ENCODE measurements at regions of chr12 and their contacts with region 1.

Region 1: DNA sequence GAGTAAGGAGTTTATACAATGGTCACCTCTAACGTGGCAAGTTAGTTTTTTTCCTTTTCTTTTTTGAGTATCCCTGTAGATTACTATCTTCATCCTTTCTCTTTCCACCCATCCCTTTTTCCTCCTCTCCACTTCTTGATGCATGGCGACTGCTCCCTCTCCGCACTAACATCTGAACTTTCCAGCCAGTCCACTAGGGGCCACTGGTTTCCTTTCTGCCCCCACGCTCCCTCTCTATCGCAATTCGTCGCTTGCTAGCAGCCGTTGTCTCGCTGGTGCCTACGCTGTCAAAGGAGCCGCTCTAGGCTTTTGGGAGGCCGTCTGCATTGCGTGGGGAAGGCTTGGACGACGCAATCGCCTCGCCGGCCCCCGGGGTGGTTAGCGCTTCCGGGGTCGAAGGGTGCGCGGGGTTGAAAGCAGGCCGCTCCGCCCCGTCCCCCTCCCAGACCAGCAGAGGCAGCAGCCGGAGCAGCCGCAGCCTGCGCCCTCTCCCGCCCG is at the start of gene PCBP2:
- DNase-seq: peak; percentile 99
- ATAC-seq: peak; percentile 97
- H3K4me3 Mint-ChIP-seq: peak within 1 kb of the TSS; percentile 94
- H3K27ac Mint-ChIP-seq: peak within 1 kb of the TSS; percentile 96
- H3K4me1 Mint-ChIP-seq: peaks cover 27% of the 10 kb centered on the region
- H3K27me3 Mint-ChIP-seq: no peaks in the 10 kb centered on the region
- total RNA-seq, gene PCBP2: 881 to 999 TPM

Region 2: GRCh38 chr12:53190108-53190729 is 261.5 kb before region 1 on chr12:
- CTCF ChIA-PET with region 1: no interaction called
- POLR2A ChIA-PET with region 1: no interaction called
- intact Hi-C with region 1: no loop called
- DNase-seq: peak; percentile 74
- ATAC-seq: peak; percentile 94
- H3K4me3 Mint-ChIP-seq: no peak overlapping the region
- H3K27ac Mint-ChIP-seq: peak overlapping the region; percentile 17
- H3K4me1 Mint-ChIP-seq: peaks cover 14% of the 10 kb centered on the region
- H3K27me3 Mint-ChIP-seq: no peaks in the 10 kb centered on the region

Region 3: DNA sequence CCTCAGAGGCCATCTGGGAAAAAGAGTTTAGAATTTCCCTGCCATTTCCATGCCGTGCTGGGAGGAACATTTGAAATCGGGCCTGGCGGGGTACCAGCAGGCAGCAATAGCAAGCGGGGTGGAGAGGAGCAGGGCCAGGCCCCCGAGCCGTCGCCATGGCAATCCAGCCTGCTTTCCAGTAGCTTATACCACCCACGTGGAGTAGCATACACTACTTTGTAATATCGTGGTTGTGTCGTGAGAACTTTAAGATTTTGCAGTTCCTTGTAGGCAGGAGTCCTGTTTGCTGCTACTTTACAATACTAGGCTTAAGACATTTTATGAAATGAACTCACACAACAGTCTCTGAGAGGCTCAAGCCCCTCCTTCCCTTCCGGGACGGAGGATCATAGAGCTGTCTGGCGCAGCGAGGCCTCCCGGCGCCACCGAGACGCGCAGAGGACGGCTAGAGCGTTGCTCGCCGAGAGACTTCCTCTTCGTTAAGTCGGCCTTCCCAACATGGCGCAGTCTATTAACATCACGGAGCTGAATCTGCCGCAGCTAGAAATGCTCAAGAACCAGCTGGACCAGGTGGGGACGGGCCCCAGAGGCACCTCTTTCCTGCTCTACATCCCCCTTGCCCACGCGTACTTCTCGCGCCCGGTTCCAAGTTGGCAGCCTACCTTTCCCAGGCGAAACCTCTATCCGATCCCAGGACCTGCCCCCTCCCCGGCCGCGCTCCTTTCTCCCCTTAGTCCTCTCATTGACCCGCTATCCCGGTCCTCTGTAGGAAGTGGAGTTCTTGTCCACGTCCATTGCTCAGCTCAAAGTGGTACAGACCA is 156.4 kb before region 1 on chr12 and contains the start of gene PFDN5:
- CTCF ChIA-PET with region 1: no interaction called
- POLR2A ChIA-PET with region 1: no interaction called
- intact Hi-C with region 1: loop called in 1 of 2 experiments (anchors 1 kb)
- DNase-seq: peak; percentile 93
- ATAC-seq: peak; percentile 88
- H3K4me3 Mint-ChIP-seq: peak within 1 kb of the TSS; percentile 85
- H3K27ac Mint-ChIP-seq: peak within 1 kb of the TSS; percentile 94
- H3K4me1 Mint-ChIP-seq: peaks cover 52% of the 10 kb centered on the region
- H3K27me3 Mint-ChIP-seq: no peaks in the 10 kb centered on the region
- total RNA-seq, gene PFDN5: 253 to 322 TPM

Region 4: DNA sequence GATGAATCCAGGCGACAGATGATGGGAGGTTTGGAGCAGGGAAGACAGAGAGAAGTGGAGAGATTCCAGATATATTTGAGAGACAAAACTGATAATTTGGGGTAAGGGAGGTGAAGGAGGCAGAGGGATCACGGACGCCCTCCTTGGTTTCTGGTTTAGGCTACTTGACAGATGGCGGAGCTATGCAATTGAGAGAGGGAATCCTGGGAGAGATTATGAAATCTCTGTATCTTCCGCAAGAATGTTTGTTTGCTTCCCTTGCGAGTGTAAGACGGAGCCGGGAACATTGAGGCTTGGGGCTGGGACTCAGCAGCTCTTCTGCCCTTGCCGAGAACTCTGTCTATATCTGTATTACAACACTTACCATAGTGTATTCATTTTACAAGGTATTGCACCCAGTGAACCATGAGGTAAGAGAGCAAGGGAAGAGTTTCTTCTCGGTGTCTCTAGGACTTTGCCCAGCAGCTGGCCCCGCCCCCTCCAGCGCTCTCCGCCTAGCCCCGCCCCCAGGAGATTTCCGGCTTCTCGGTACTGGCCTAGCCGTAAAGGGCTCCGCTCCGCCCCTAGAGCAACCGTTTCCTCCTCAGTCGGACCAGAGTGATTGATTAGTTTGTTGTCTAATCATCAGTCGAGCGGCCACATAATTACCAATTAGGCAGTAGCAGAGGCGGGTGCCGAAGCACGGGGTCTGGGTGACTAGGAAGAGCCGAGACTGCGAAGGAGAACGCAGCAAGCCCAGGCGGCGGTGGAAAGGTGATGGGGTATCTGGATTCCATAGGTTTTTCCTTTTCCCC is 10.5 kb before region 1 on chr12 and contains the start of gene PRR13:
- CTCF ChIA-PET with region 1: interaction called, 4 read pairs
- POLR2A ChIA-PET with region 1: interaction called, 4 read pairs
- intact Hi-C with region 1: loop called (anchors 1 kb)
- DNase-seq: peak; percentile 100
- ATAC-seq: peak; percentile 99
- H3K4me3 Mint-ChIP-seq: peak within 1 kb of the TSS; percentile 92
- H3K27ac Mint-ChIP-seq: peak within 1 kb of the TSS; percentile 95
- H3K4me1 Mint-ChIP-seq: peaks cover 30% of the 10 kb centered on the region
- H3K27me3 Mint-ChIP-seq: no peaks in the 10 kb centered on the region
- total RNA-seq, gene PRR13: 250 to 266 TPM

Region 5: DNA sequence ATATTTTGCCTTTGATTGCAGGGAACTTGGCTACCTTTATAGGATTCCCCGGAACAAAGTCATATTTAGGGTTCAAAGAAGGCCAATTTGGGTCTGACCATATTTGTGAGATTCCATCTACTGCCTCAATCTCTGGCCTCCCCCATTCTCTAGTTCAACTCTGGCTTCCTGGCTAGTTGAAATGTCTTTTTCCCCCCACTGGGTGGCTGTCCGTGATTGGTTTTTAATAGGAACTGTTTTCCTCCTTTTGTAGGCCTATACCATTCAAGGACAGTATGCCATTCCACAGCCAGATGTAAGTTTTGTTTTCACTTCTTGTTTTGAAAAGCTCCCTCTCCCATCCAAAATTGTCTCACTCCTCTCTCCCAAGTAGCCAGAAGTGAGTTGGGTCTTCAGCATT is 14.0 kb after region 1 on chr12:
- CTCF ChIA-PET with region 1: no interaction called
- POLR2A ChIA-PET with region 1: interaction called, 19 read pairs
- intact Hi-C with region 1: loop called in 1 of 2 experiments (anchors 2 kb)
- DNase-seq: no peak
- ATAC-seq: no peak
- H3K4me3 Mint-ChIP-seq: no peak overlapping the region
- H3K27ac Mint-ChIP-seq: peak overlapping the region; percentile 15
- H3K4me1 Mint-ChIP-seq: peaks cover 30% of the 10 kb centered on the region
- H3K27me3 Mint-ChIP-seq: no peaks in the 10 kb centered on the region

Region 6: GRCh38 chr12:53492830-53493611 is 41.3 kb after region 1 on chr12:
- CTCF ChIA-PET with region 1: interaction called, 3 read pairs
- POLR2A ChIA-PET with region 1: interaction called, 4 read pairs
- intact Hi-C with region 1: loop called in 1 of 2 experiments (anchors 2 kb)
- DNase-seq: peak; percentile 93
- ATAC-seq: peak; percentile 94
- H3K4me3 Mint-ChIP-seq: peak overlapping the region; percentile 80
- H3K27ac Mint-ChIP-seq: peak overlapping the region; percentile 88
- H3K4me1 Mint-ChIP-seq: peaks cover 20% of the 10 kb centered on the region
- H3K27me3 Mint-ChIP-seq: no peaks in the 10 kb centered on the region

Region 7: GRCh38 chr12:53500776-53501614 is 49.3 kb after region 1 on chr12 and contains the start of gene TARBP2:
- CTCF ChIA-PET with region 1: interaction called, 3 read pairs
- POLR2A ChIA-PET with region 1: no interaction called
- intact Hi-C with region 1: loop called (anchors 1 to 2 kb)
- DNase-seq: peak; percentile 98
- ATAC-seq: peak; percentile 84
- H3K4me3 Mint-ChIP-seq: peak within 1 kb of the TSS; percentile 81
- H3K27ac Mint-ChIP-seq: peak within 1 kb of the TSS; percentile 98
- H3K4me1 Mint-ChIP-seq: peaks cover 31% of the 10 kb centered on the region
- H3K27me3 Mint-ChIP-seq: no peaks in the 10 kb centered on the region
- total RNA-seq, gene TARBP2: 28.3 to 30.2 TPM

Region 8: DNA sequence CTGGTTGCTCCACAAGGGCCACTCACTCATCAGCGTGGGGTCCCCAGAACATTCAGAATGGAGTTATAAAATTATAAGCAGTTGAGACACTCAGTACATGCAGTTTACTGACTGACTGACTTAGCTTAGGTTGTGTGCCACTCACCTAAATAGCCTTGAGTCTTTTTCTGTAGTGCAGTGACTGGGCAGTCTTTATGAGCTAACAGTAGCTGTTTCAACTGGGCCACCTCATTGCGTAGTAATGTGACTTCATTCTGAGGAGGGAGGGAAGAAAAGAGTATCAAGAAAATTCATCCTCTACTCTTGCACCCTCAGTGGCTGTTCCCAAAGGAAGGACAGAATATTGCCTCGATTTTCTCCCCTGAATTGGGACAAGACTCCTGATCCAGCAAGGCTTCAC is 71.4 kb after region 1 on chr12:
- CTCF ChIA-PET with region 1: no interaction called
- POLR2A ChIA-PET with region 1: no interaction called
- intact Hi-C with region 1: no loop called
- DNase-seq: no peak
- ATAC-seq: no peak
- H3K4me3 Mint-ChIP-seq: no peak overlapping the region
- H3K27ac Mint-ChIP-seq: no peak overlapping the region
- H3K4me1 Mint-ChIP-seq: no peaks in the 10 kb centered on the region
- H3K27me3 Mint-ChIP-seq: no peaks in the 10 kb centered on the region

Region 9: GRCh38 chr12:53596920-53597363 is 145.2 kb after region 1 on chr12:
- CTCF ChIA-PET with region 1: no interaction called
- POLR2A ChIA-PET with region 1: no interaction called
- intact Hi-C with region 1: no loop called
- DNase-seq: no peak
- ATAC-seq: no peak
- H3K4me3 Mint-ChIP-seq: no peak overlapping the region
- H3K27ac Mint-ChIP-seq: no peak overlapping the region
- H3K4me1 Mint-ChIP-seq: peaks cover 10% of the 10 kb centered on the region
- H3K27me3 Mint-ChIP-seq: no peaks in the 10 kb centered on the region

Region 10: DNA sequence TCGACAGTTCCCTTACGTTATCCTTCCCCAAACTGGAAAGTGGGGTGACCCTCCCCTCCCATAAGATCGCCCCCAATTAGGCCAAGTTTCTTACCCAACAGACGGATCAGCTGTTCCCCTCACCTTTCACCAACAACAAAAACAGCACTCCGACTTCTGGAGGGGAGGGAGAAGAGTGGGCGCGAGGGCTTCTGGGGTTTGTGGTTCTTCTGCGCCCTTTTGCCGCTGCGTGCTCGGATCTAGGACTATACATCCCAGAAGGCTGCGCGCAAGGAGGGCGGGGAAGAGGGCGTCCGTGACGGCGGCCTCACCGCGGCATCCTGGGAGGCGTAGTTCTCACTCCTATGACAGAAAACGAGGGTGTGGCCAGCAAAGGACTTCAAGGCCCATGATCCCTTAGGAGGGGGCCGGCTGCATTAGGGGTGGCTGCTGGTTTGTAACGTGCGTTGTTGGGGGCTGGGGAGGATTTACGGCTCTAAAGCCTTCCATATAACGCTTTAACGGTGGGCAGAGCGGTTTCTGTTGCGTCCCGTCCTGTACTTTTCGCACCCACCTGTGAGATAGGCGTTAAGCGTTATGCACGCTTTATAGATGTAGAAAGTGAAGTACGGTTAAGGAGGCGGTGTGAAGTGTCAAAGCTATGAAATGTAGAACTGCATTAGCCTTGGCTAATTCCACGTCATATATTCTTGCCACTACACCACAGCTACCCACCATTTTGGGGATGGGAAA is 275.8 kb after region 1 on chr12 and contains the start of gene CALCOCO1:
- CTCF ChIA-PET with region 1: no interaction called
- POLR2A ChIA-PET with region 1: no interaction called
- intact Hi-C with region 1: loop called in 1 of 2 experiments (anchors 1 kb)
- DNase-seq: peak; percentile 99
- ATAC-seq: peak; percentile 99
- H3K4me3 Mint-ChIP-seq: peak within 1 kb of the TSS; percentile 80
- H3K27ac Mint-ChIP-seq: peak within 1 kb of the TSS; percentile 73
- H3K4me1 Mint-ChIP-seq: peaks cover 20% of the 10 kb centered on the region
- H3K27me3 Mint-ChIP-seq: no peaks in the 10 kb centered on the region
- total RNA-seq, gene CALCOCO1: 17.1 to 20.4 TPM